ENCODE measurements at regions of chr11 and their contacts with region 1.

Region 1: DNA sequence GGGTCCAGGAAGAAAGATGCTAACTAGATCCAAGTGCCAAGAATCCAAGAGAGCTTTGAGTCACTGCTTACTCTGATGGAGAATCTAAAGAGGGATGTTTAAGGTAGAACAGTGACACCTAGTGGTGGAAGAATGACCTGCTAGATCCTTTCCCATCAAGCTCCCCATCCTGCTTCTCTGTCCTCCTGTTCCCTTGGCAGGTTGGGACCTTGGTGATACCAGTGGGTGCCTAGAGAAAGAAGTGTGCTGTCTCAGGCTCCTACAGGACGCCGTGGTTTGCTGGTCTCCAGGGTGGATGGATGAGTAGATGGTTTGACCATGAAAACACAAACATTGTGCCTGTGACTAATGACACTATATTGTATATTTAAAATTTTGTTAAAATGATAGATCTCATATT is 383.7 kb downstream of the TMEM135 start:
- DNase-seq: peak in 2 of 5 donors; percentile 16 to 37
- H3K4me3 ChIP-seq: no peak overlapping the region
- H3K4me3 Mint-ChIP-seq: no peak overlapping the region
- H3K27ac ChIP-seq: no peak overlapping the region
- H3K27ac Mint-ChIP-seq: no peak overlapping the region
- H3K4me1 ChIP-seq: no peaks in the 10 kb centered on the region
- H3K4me1 Mint-ChIP-seq: no peaks in the 10 kb centered on the region
- H3K27me3 ChIP-seq: no peaks in the 10 kb centered on the region
- H3K27me3 Mint-ChIP-seq: peaks cover 0 to 5% of the 10 kb centered on the region in 2 donors

Region 2: DNA sequence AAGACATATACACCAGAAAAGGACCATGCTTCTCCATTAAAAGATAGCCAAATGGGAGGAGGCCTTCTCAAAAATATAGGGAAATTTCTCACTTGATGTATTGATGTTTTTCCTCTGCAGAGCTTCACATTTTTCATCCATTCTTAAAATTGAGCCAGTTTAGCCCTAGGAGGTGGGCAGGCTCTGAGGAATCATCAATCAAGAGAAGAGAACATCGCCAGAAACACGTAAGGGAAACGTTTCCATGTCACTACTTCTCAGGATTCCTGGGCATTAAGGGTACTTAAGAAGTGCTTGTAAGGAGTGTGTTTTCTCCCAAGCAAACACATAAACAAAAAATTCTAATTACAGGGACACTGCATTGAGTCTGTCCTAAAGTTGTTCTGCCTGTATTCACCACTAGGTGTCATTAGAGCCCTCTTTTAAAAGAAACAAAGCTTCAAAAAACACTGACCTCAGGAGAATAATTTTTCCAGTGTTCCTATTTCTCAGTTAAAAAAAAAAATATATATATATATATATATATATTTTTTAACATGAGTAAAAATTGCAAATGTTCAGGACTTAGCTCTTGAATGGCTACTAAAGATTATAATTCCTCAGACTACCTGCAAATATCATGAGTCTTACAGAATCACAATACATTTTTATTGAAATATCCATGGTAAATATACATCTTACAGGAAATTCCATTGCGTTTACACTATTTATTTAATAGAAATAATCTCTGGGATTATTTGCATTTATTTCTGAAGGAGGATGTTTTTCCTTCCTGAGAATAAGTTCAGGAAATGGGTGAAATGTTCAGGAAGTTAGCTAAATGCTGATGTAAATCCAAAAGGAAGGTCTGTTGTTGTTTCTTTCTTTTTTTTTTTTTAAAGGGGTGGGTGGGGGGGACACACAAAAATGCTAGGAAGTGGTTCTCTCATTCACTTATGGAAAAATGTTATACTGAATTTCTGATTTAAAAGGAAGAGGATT is 482.2 kb before region 1 on chr11:
- CTCF ChIA-PET with region 1: interaction called, 20 read pairs
- POLR2A ChIA-PET with region 1: no interaction called
- DNase-seq: peak in 2 of 5 donors; percentile 10 to 16
- H3K4me3 ChIP-seq: no peak overlapping the region
- H3K4me3 Mint-ChIP-seq: no peak overlapping the region
- H3K27ac ChIP-seq: peak overlapping the region; percentile 48
- H3K27ac Mint-ChIP-seq: no peak overlapping the region
- H3K4me1 ChIP-seq: no peaks in the 10 kb centered on the region
- H3K4me1 Mint-ChIP-seq: no peaks in the 10 kb centered on the region
- H3K27me3 ChIP-seq: no peaks in the 10 kb centered on the region
- H3K27me3 Mint-ChIP-seq: peaks cover 10 to 14% of the 10 kb centered on the region in 2 donors

Region 3: DNA sequence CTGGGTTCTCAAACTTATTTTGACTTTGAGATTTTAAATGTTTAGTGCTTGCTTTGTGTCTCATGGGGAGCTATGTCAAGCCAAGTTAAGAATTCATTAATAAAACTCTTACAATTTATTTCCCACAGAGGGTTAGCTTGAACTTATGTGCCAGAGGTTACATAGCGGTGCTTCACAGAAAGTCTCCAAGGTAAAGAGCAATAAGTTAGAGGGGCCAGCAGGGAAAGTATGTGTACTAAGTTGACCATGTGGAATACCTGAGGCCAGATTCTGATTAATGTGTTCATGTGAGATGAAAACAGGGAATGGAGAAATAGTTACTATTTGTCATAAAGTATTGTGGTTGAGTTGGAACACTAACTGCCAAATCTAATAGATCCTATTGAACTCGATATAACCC is 234.3 kb before region 1 on chr11:
- CTCF ChIA-PET with region 1: no interaction called
- POLR2A ChIA-PET with region 1: no interaction called
- DNase-seq: no peak
- H3K4me3 ChIP-seq: no peak overlapping the region
- H3K4me3 Mint-ChIP-seq: no peak overlapping the region
- H3K27ac ChIP-seq: no peak overlapping the region
- H3K27ac Mint-ChIP-seq: peak overlapping the region in 1 of 8 donors; percentile 47
- H3K4me1 ChIP-seq: no peaks in the 10 kb centered on the region
- H3K4me1 Mint-ChIP-seq: peaks cover 5 to 11% (median 9%) of the 10 kb centered on the region in 3 donors
- H3K27me3 ChIP-seq: no peaks in the 10 kb centered on the region
- H3K27me3 Mint-ChIP-seq: no peaks in the 10 kb centered on the region

Region 4: DNA sequence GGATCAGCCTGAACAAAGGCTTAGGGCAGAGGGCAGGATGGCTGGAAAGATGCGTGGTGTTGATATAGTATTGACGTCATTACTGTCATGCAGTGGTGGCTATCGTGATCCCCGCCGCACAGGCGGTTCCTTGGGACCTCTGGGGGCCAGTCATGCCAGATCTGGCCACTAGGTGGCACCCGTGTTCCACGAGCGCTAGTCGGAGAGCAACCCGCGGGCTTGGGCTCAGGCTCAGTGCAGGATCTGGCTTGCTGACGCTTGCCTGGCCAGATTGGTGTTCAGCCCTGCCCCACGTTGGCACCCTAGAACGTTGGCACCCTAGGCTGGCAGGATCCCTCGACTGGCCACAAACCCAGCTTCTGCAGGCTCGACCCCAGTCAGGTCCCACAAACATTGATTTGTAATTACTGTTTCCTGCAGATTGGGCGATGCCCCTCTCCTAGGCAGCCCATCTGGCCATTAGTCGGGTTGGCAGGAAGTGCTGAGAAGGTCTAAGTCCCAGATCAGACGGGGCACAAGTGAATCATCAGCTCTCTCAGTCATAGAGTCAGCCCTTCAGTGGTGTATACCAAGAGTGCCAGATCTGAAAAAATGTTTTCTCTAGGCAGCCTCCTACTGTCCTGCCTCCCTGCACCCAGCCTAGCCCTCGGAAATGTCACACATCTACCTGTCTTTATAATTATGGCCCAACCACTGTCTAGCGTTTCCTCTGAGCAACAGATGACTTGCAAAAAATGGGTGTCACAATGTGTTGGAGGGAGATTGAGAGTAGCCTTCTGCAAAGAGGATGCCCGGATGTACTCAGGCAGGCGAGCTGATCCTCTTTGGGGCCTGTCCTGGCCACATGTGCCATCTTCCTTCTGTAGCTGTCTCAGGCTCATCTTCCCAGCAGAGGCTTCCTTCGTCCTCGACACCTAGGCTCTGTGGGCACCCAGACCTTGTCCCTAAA is 68.4 kb before region 1 on chr11:
- CTCF ChIA-PET with region 1: interaction called, 27 read pairs
- POLR2A ChIA-PET with region 1: no interaction called
- DNase-seq: peak; percentile 61 to 82 (median 72)
- H3K4me3 ChIP-seq: no peak overlapping the region
- H3K4me3 Mint-ChIP-seq: peak overlapping the region in 3 of 7 donors; percentile 43 to 57 (median 45)
- H3K27ac ChIP-seq: no peak overlapping the region
- H3K27ac Mint-ChIP-seq: peak overlapping the region in 1 of 8 donors; percentile 59
- H3K4me1 ChIP-seq: peaks cover 7% of the 10 kb centered on the region
- H3K4me1 Mint-ChIP-seq: peaks cover 11 to 12% (median 11%) of the 10 kb centered on the region in 3 donors
- H3K27me3 ChIP-seq: no peaks in the 10 kb centered on the region
- H3K27me3 Mint-ChIP-seq: peaks cover 8 to 14% of the 10 kb centered on the region in 2 donors

Measured in CD8-positive, alpha-beta memory T cell (primary cell).